Activated naive CD4-positive, alpha-beta T cell treated with anti-CD3 and anti-CD28 coated beads for 36 hours (primary cell): ENCODE measurements at regions of chr20 and their contacts with region 1.

Region 1: GRCh38 chr20:58407966-58408557 is 19.0 kb downstream of the VAPB start:
- DNase-seq: peak; percentile 63
- H3K4me3 Mint-ChIP-seq: peak overlapping the region; percentile 7
- H3K27ac Mint-ChIP-seq: peak overlapping the region; percentile 81
- H3K4me1 Mint-ChIP-seq: peaks cover 30% of the 10 kb centered on the region
- H3K27me3 Mint-ChIP-seq: no peaks in the 10 kb centered on the region

Region 2: GRCh38 chr20:57391074-57391554 is 1016.9 kb before region 1 on chr20 and contains the start of gene RBM38:
- CTCF ChIA-PET with region 1: no interaction called
- intact Hi-C with region 1: loop called (anchors 10 kb)
- DNase-seq: peak; percentile 80
- H3K4me3 Mint-ChIP-seq: peak within 1 kb of the TSS; percentile 90
- H3K27ac Mint-ChIP-seq: peak within 1 kb of the TSS; percentile 97
- H3K4me1 Mint-ChIP-seq: peaks cover 46% of the 10 kb centered on the region
- H3K27me3 Mint-ChIP-seq: no peaks in the 10 kb centered on the region
- total RNA-seq, gene RBM38: 60.3 to 63.1 TPM

Region 3: GRCh38 chr20:58388882-58389323 is 19.2 kb before region 1 on chr20 and contains the start of gene VAPB:
- CTCF ChIA-PET with region 1: no interaction called
- intact Hi-C with region 1: loop called (anchors 1 kb)
- DNase-seq: peak; percentile 96
- H3K4me3 Mint-ChIP-seq: peak within 1 kb of the TSS; percentile 96
- H3K27ac Mint-ChIP-seq: peak within 1 kb of the TSS; percentile 90
- H3K4me1 Mint-ChIP-seq: peaks cover 42% of the 10 kb centered on the region
- H3K27me3 Mint-ChIP-seq: no peaks in the 10 kb centered on the region
- total RNA-seq, gene VAPB: 26.8 to 27.9 TPM

Region 4: GRCh38 chr20:58420798-58421496 is 12.9 kb after region 1 on chr20:
- CTCF ChIA-PET with region 1: no interaction called
- intact Hi-C with region 1: no loop called
- DNase-seq: no peak
- H3K4me3 Mint-ChIP-seq: no peak overlapping the region
- H3K27ac Mint-ChIP-seq: no peak overlapping the region
- H3K4me1 Mint-ChIP-seq: peaks cover 33% of the 10 kb centered on the region
- H3K27me3 Mint-ChIP-seq: no peaks in the 10 kb centered on the region